Activated naive CD8-positive, alpha-beta T cell treated with anti-CD3 and anti-CD28 coated beads, Interleukin-2, amount 10 ng/mL, durations not matched to agents 7 days and 5 days (primary cell): ENCODE measurements at regions of chr16 and their contacts with region 1.

Region 1: GRCh38 chr16:70416748-70417616 is 21.9 kb downstream of the ST3GAL2 start:
- DNase-seq: no peak
- ATAC-seq: no peak
- H3K4me3 Mint-ChIP-seq: peak overlapping the region; percentile 53
- H3K27ac Mint-ChIP-seq: peak overlapping the region; percentile 92
- H3K4me1 Mint-ChIP-seq: peaks cover 39% of the 10 kb centered on the region
- H3K27me3 Mint-ChIP-seq: no peaks in the 10 kb centered on the region

Region 2: DNA sequence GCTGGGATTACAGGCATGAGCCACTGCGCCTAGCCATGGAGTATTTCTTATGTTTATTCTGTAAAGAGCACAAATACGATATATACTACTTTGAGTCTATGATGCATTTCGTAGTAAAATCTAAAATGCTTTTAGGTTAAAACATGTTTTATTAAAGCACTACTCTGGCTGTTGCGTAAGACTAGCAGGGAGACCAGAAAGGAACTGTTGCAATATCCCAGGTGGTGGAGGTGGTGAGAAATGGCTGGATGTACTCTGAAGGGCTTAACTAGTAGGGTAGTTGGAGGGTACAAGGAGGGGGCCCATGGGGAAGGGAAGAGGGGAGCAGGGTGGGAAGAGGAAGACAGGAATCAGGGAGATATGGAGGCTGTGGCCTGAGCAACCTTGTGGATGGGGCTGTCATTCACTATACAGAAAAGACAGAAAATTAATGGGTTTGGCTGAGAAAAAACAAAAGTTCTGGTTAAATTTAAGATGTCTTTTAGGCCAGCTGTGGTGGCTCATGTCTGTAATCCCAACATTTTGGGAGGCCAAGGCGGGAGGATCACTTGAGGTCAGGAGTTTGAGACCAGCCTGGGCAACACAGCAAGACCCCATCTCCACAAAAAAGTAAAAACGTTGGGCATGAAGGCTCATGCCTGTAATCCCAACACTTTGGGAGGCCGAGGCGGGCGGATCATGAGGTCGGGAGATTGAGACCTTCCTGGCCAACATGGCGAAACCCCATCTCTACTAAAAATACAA is 13.9 kb before region 1 on chr16:
- POLR2A ChIA-PET with region 1: interaction called, 23 read pairs
- DNase-seq: no peak
- ATAC-seq: no peak
- H3K4me3 Mint-ChIP-seq: peak overlapping the region; percentile 17
- H3K27ac Mint-ChIP-seq: peak overlapping the region; percentile 76
- H3K4me1 Mint-ChIP-seq: peaks cover 36% of the 10 kb centered on the region
- H3K27me3 Mint-ChIP-seq: no peaks in the 10 kb centered on the region

Region 3: DNA sequence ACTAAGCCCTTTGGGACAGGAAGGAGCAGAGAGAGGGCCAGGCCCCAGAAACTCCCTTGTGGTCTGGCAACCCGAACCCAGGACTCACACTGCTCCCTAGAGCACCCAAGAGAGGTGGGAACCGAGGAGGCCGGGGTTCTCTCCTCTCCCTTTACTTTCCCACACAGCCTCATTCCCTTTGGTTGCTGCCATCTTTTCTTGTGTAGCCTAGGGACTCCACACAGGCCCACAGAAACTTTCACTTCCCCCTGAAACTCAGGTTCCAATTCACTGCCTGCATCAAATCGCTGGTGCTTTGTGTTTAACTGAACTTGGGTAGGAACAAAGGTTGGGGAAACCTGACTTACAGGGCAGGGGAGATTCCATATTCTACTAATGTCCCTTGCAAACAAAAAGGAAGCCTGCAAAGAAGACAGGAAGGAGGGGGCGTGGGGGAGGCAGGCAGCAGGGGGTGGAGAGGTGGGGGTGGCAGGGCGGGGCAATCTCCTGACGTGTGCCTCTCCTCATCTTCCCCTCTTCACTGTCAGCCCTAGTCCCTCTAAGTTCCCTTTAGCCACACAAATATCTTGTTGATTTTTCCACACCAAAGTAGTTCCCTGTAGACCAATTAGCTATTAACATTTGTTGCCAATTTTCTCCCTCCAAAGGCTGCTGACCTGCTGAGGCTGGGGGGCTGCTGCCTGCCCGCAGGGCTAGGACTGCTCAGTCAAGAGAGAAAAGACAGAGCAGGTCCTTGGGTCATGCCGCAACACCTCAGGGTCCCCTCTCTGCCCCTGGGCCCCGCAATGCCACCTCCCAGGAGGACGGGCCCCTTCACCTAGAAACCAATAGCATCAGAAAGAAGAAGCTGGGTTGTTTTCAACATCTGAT is 13.9 kb after region 1 on chr16:
- POLR2A ChIA-PET with region 1: interaction called, 18 read pairs
- DNase-seq: peak; percentile 43
- ATAC-seq: peak; percentile 65
- H3K4me3 Mint-ChIP-seq: peak overlapping the region; percentile 72
- H3K27ac Mint-ChIP-seq: peak overlapping the region; percentile 87
- H3K4me1 Mint-ChIP-seq: peaks cover 51% of the 10 kb centered on the region
- H3K27me3 Mint-ChIP-seq: no peaks in the 10 kb centered on the region

Region 4: DNA sequence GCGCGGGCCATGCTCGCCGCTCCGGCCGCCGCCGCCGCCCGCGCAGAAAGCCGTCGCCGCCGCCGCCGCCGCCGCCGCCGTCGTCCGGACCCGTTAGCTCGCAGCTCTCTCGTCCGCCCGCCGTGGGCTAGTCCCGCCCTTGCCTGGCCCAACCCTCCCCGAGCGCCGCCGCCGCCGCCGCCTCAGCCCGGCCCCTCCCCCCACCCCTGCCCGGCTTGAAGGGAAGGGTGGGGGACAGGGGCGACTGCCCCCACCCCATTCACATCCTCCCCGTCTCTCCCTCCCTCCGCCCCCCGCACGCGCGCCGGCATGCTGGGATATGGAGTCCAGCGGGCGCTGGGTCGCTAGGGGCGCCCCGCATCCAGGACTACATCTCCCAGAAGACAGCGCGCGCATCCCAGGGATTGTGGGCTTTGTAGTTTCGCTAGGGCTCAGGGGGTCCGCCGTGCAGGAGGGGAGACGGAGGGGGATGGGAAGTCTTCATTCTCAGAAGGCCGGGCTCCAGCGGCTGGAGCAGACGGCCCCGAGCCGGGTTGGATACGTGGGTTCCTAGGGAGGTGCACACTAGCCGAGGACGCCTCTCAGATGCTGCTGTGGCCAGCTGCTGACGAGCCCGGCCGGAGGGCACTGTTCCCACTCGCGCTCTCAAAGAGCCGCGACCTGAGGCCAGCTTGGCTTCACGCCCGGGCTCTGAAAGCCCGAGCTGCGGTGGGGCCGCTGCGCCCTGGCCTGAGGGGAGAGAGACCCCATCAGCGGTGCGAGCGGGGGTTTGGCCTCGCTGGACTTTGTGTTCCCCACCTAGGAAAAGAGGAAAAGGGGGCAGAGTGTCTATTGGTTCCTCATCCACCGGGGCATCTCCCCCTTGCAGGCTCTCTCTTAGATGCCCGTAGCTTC is 22.2 kb after region 1 on chr16 and contains the start of gene ST3GAL2:
- POLR2A ChIA-PET with region 1: interaction called, 20 read pairs
- DNase-seq: peak; percentile 93
- ATAC-seq: peak; percentile 94
- H3K4me3 Mint-ChIP-seq: peak within 1 kb of the TSS; percentile 95
- H3K27ac Mint-ChIP-seq: peak within 1 kb of the TSS; percentile 93
- H3K4me1 Mint-ChIP-seq: peaks cover 28% of the 10 kb centered on the region
- H3K27me3 Mint-ChIP-seq: no peaks in the 10 kb centered on the region
- total RNA-seq, gene ST3GAL2: 31.9 to 38.6 TPM

Region 5: DNA sequence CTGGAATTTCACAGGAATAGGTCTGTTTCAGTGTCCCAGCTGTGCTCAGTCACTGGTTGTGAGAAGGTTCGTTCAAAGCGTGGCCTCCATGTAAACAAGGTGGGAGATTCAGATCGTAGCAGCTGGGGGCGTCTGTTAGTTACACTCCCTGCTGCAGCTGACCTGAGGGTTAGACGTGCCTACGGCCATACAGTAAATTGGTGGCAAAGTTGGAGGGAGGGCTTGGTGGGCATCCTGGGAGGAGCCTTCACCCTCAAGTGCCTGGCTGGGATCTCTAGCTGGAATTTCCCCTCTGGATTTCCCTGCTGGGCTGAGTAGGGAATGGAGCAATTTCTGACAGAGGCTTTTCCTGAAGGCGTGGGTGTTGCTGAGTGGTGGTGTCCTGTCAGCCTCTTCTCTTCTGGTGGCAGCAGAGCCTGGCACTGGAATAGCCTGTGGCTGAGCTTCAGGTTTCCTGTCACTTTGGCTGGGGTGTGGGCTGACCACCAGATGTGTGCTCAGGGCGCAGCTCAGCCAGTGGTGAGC is 43.8 kb after region 1 on chr16:
- POLR2A ChIA-PET with region 1: no interaction called
- DNase-seq: no peak
- ATAC-seq: no peak
- H3K4me3 Mint-ChIP-seq: no peak overlapping the region
- H3K27ac Mint-ChIP-seq: no peak overlapping the region
- H3K4me1 Mint-ChIP-seq: peaks cover 9% of the 10 kb centered on the region
- H3K27me3 Mint-ChIP-seq: no peaks in the 10 kb centered on the region